ENCODE measurements at regions of chr5 and their contacts with region 1.

Region 1: GRCh38 chr5:34656001-34656699 is at the start of gene RAI14:
- DNase-seq: peak; percentile 85 to 95
- ATAC-seq: peak; percentile 90
- H3K4me3 ChIP-seq: peak within 1 kb of the TSS; percentile 93 to 98
- H3K27ac ChIP-seq: peak within 1 kb of the TSS; percentile 81 to 97
- H3K4me1 ChIP-seq: no peaks in the 10 kb centered on the region
- H3K27me3 ChIP-seq: no peaks in the 10 kb centered on the region
- total RNA-seq, gene RAI14: 99.8 to 214 TPM

Region 2: GRCh38 chr5:34474573-34475021 is 181.6 kb before region 1 on chr5:
- intact Hi-C with region 1: no loop called
- DNase-seq: no peak
- ATAC-seq: peak; percentile 87
- H3K4me3 ChIP-seq: no peak overlapping the region
- H3K27ac ChIP-seq: no peak overlapping the region
- H3K4me1 ChIP-seq: no peaks in the 10 kb centered on the region
- H3K27me3 ChIP-seq: no peaks in the 10 kb centered on the region

Region 3: DNA sequence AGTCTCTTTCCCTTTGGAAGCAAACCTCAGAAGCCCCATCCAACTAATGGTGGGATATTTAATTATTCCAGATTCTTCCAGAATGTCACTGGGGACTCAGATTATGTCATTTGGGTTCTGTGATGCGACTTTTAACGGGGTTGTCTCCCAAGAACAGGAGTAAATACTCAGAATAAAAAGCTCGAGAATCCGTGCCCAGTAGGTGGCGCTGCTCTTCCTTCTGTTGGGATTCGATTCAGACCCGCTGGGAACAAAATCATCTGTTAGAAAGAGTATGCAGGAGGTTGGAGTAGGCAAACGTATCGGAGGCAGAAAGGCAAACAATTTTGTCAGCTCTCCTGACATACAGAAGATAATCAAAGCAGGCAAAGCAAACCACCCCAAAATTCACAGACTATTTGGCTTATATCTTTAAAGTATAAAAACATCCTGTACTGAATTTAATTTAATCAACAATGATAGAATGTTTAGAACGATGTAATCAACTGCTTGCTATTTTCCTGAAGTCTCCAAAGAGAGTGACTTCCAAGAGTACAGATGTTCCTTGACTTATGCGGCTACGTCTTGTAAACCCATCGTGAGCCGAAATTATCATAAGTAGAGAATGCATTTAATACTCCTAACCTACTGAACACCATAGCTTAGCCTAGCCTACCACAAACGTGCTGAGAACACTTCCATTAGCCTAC is 169.8 kb before region 1 on chr5:
- intact Hi-C with region 1: loop called in 1 of 2 experiments (anchors 2 kb)
- DNase-seq: peak; percentile 87 to 95
- ATAC-seq: peak; percentile 91
- H3K4me3 ChIP-seq: no peak overlapping the region
- H3K27ac ChIP-seq: peak overlapping the region; percentile 92
- H3K4me1 ChIP-seq: peaks cover 5% of the 10 kb centered on the region in 2 donors
- H3K27me3 ChIP-seq: no peaks in the 10 kb centered on the region

Region 4: DNA sequence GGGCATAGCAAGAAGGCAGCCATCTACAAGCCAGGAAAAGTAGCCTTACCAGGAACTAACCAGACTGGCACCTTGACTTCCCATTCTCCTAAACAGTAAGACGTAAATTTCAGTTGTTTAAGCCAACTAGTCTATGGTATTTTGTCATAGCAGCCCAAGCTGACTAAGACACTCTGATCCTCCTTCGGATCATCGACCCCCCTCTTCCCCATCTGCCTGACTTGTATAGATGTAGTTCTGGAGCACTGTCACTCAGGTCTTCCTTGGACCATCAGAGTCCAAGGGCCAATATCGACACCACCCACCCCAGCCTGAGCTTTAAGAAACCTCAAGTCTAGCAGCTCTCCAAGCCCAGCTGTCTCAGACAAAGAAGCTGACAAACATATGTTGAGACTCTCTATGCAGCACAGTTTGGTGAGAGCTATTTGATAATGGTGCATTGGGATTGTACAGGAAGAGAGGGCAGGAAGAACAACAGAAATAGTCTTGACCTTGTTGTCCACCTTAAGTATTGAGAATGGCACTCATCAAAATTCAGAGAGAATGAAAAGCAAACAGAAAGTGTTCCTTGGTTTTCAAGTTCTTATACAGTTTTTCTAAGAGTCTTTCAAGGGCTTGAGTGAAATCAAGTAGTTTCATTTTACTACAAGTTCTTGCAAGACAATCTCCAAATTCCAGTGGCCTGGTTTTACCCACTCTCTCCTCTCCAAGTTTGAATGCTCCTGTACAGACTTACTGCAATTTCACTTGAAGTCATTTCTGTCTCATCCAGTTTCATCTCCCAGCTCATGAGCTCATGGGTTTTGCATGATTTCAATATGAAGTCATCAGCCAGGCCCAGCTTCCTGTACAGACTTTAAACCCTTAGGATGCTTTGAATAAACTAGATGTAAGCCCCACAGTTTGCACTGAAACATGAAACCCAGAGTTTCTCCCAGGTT is 122.3 kb before region 1 on chr5:
- intact Hi-C with region 1: loop called in 1 of 2 experiments (anchors 5 kb)
- DNase-seq: no peak
- ATAC-seq: no peak
- H3K4me3 ChIP-seq: no peak overlapping the region
- H3K27ac ChIP-seq: peak overlapping the region; percentile 90 to 97
- H3K4me1 ChIP-seq: peaks cover 6 to 11% of the 10 kb centered on the region in 2 donors
- H3K27me3 ChIP-seq: no peaks in the 10 kb centered on the region

Region 5: DNA sequence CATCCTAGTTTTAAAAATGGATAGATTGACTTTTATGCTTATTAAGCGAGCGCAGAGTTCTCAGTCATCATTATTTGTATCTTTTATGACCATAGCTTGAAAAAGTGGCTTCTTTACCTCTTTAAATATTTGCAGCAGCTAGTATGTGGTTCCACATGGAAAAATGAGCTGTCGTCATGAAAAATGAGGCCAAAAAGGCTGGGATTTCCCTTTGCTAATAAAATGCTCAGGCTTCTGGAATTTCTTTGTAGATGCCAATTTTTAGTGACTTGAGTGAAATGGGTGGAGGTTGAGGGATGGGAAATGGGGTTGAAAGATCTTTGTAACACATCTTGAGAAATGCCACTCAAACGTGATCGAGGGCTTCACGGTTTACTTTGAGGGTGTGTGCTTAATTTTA is 35.2 kb after region 1 on chr5:
- intact Hi-C with region 1: loop called in 1 of 2 experiments (anchors 5 kb)
- DNase-seq: no peak
- ATAC-seq: no peak
- H3K4me3 ChIP-seq: no peak overlapping the region
- H3K27ac ChIP-seq: no peak overlapping the region
- H3K4me1 ChIP-seq: peaks cover 13 to 14% of the 10 kb centered on the region in 2 donors
- H3K27me3 ChIP-seq: no peaks in the 10 kb centered on the region

Region 6: GRCh38 chr5:34717426-34718327 is 61.5 kb after region 1 on chr5:
- intact Hi-C with region 1: loop called in 1 of 2 experiments (anchors 5 kb)
- DNase-seq: no peak
- ATAC-seq: peak; percentile 68
- H3K4me3 ChIP-seq: no peak overlapping the region
- H3K27ac ChIP-seq: peak overlapping the region; percentile 20 to 93
- H3K4me1 ChIP-seq: peaks cover 0 to 3% of the 10 kb centered on the region in 2 donors
- H3K27me3 ChIP-seq: no peaks in the 10 kb centered on the region

Region 7: GRCh38 chr5:34898258-34898895 is 242.2 kb after region 1 on chr5:
- intact Hi-C with region 1: loop called (anchors 5 to 10 kb)
- DNase-seq: peak; percentile 64 to 80
- ATAC-seq: peak; percentile 86
- H3K4me3 ChIP-seq: no peak overlapping the region
- H3K27ac ChIP-seq: no peak overlapping the region
- H3K4me1 ChIP-seq: no peaks in the 10 kb centered on the region
- H3K27me3 ChIP-seq: no peaks in the 10 kb centered on the region